ENCODE measurements at regions of chr1 and their contacts with region 1.

Region 1: GRCh38 chr1:181479137-181479745 is 4.1 kb upstream of the CACNA1E start:
- DNase-seq: peak; percentile 45
- ATAC-seq: peak; percentile 97
- H3K4me3 ChIP-seq: no peak overlapping the region
- H3K27ac ChIP-seq: no peak overlapping the region
- H3K4me1 ChIP-seq: no peaks in the 10 kb centered on the region
- H3K27me3 ChIP-seq: peaks cover 3 to 28% of the 10 kb centered on the region in 2 experiments; a peak in 3 of 5 replicates
- CTCF ChIP-seq: peak; percentile 85
- EP300 ChIP-seq: no peak
- POLR2A ChIP-seq: no peak
- RAD21 ChIP-seq: peak; percentile 58

Region 2: GRCh38 chr1:181504399-181504842 is 25.2 kb after region 1 on chr1:
- CTCF ChIA-PET with region 1: interaction called, 7 read pairs
- POLR2A ChIA-PET with region 1: no interaction called
- in situ Hi-C with region 1: no loop called
- intact Hi-C with region 1: loop called (anchors 1 kb)
- DNase-seq: peak; percentile 48
- ATAC-seq: peak; percentile 97
- H3K4me3 ChIP-seq: no peak overlapping the region
- H3K27ac ChIP-seq: no peak overlapping the region
- H3K4me1 ChIP-seq: peaks cover 11% of the 10 kb centered on the region; the same call in 1 of the 2 replicates
- H3K27me3 ChIP-seq: no peaks in the 10 kb centered on the region
- CTCF ChIP-seq: peak; percentile 51
- EP300 ChIP-seq: no peak
- POLR2A ChIP-seq: no peak
- RAD21 ChIP-seq: no peak

Region 3: DNA sequence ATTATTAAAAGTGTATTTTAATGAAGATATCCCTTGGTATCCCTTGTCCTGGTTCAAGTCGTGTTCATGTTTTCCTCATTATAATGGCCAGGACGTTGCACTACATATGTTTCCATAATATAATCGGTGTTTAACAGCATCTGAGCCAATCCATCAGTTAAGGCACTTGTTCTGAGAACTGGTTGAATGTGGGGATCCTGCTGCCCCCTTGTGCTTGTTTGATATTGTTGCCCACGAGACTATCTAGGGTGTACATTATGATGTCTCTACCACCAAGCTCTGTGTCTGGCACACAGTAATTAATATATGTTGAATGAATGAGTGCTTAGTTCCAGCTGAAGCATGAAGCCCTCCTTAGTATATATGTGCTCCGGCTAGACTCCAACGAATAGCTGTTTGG is 197.0 kb after region 1 on chr1:
- CTCF ChIA-PET with region 1: interaction called, 3 read pairs
- POLR2A ChIA-PET with region 1: no interaction called
- in situ Hi-C with region 1: loop called (anchors 5 kb)
- intact Hi-C with region 1: loop called (anchors 1 kb)
- DNase-seq: peak; percentile 23
- ATAC-seq: peak; percentile 74
- H3K4me3 ChIP-seq: no peak overlapping the region
- H3K27ac ChIP-seq: no peak overlapping the region
- H3K4me1 ChIP-seq: no peaks in the 10 kb centered on the region
- H3K27me3 ChIP-seq: peaks cover 1 to 7% of the 10 kb centered on the region in 2 experiments; a peak in 2 of 5 replicates
- CTCF ChIP-seq: peak; percentile 58
- EP300 ChIP-seq: no peak
- POLR2A ChIP-seq: no peak
- RAD21 ChIP-seq: no peak

Region 4: DNA sequence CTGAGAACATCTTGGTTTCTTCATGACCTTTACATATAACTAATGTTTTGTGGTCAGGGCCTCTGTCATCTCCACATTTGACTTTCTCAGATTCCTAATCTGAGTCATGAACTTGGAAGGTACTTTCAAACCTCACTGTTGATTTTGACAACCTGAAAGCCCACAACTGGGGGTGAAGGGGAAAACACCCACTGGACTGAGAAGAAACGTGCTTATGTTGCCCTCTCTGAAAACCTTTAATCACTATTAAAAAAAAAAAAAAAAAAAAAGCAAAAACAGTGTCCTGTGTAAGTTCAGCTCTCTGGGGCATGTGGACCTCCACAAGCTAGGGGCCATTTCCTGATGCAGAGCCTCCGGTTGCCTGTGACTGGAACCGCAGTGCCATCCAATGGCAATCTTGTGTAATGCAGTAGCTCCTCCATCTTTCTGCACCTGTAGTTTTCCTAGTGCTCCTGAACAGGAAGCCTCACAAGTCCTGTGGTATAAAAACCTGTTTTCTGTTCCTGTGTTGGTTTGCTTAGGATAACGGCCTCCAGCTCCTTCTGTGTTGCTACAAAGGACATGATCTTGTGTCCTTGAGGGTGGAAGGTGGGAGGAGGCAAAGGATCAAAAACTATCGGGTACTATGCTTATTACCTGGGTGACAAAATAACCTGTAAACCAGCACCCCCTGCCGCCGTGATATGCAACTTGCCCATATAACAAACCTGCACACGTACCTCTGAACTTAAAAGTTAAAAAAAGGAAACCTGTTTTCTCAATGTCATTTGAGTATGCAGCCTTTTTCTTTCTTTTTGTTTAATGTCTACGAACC is 457.7 kb after region 1 on chr1:
- CTCF ChIA-PET with region 1: interaction called, 18 read pairs
- POLR2A ChIA-PET with region 1: no interaction called
- in situ Hi-C with region 1: loop called (anchors 10 kb)
- intact Hi-C with region 1: no loop called
- DNase-seq: peak; percentile 57
- ATAC-seq: peak; percentile 97
- H3K4me3 ChIP-seq: no peak overlapping the region
- H3K27ac ChIP-seq: no peak overlapping the region
- H3K4me1 ChIP-seq: no peaks in the 10 kb centered on the region
- H3K27me3 ChIP-seq: no peaks in the 10 kb centered on the region; a peak in 1 of 5 replicates
- CTCF ChIP-seq: peak; percentile 86
- EP300 ChIP-seq: no peak
- POLR2A ChIP-seq: no peak
- RAD21 ChIP-seq: peak; percentile 69

Region 5: GRCh38 chr1:182054698-182055326 is 575.6 kb after region 1 on chr1:
- CTCF ChIA-PET with region 1: interaction called, 12 read pairs
- POLR2A ChIA-PET with region 1: no interaction called
- in situ Hi-C with region 1: loop called (anchors 10 kb)
- intact Hi-C with region 1: loop called (anchors 10 kb)
- DNase-seq: peak; percentile 39
- ATAC-seq: peak; percentile 65
- H3K4me3 ChIP-seq: no peak overlapping the region
- H3K27ac ChIP-seq: no peak overlapping the region
- H3K4me1 ChIP-seq: no peaks in the 10 kb centered on the region
- H3K27me3 ChIP-seq: no peaks in the 10 kb centered on the region
- CTCF ChIP-seq: peak; percentile 52
- EP300 ChIP-seq: no peak
- POLR2A ChIP-seq: no peak
- RAD21 ChIP-seq: no peak

Region 6: GRCh38 chr1:182069028-182069466 is 589.8 kb after region 1 on chr1:
- CTCF ChIA-PET with region 1: no interaction called
- POLR2A ChIA-PET with region 1: no interaction called
- in situ Hi-C with region 1: loop called (anchors 10 kb)
- intact Hi-C with region 1: no loop called
- DNase-seq: peak; percentile 42
- ATAC-seq: peak; percentile 99
- H3K4me3 ChIP-seq: no peak overlapping the region
- H3K27ac ChIP-seq: no peak overlapping the region
- H3K4me1 ChIP-seq: peaks cover 15% of the 10 kb centered on the region
- H3K27me3 ChIP-seq: peaks cover 0 to 21% of the 10 kb centered on the region in 2 experiments; a peak in 2 of 5 replicates
- CTCF ChIP-seq: peak; percentile 81
- EP300 ChIP-seq: no peak
- POLR2A ChIP-seq: no peak
- RAD21 ChIP-seq: 0 out of 2 replicates have a peak, but pooled peaks have one; percentile 25